ENCODE measurements at regions of chr1 and their contacts with region 1.

Region 1: GRCh38 chr1:107474877-107475612 is 334.2 kb downstream of the NTNG1 start:
- DNase-seq: no peak
- H3K4me3 Mint-ChIP-seq: no peak overlapping the region
- H3K27ac Mint-ChIP-seq: peak overlapping the region; percentile 53
- H3K4me1 Mint-ChIP-seq: peaks cover 13% of the 10 kb centered on the region
- H3K27me3 Mint-ChIP-seq: no peaks in the 10 kb centered on the region
- CTCF ChIP-seq: no peak

Region 2: DNA sequence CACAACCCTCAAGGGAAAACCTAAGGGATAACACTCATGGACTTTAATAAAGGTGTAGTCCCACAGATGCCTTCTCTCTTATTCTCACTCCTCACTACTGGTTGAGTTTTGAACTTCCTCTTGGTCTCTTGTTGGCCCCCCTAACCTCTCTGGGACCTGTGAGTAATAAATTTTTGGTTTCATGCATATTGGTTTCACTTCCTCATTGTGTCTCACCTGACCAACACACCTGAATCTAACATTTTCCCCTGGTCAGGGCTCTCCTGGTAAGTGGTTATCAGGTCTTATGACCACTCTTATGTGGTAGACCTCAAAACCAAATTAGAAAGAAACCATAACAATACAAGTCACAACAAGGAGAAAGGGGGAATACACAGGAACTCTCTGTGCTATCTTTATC is 479.1 kb before region 1 on chr1:
- CTCF ChIA-PET with region 1: no interaction called
- POLR2A ChIA-PET with region 1: no interaction called
- intact Hi-C with region 1: no loop called
- DNase-seq: no peak
- H3K4me3 Mint-ChIP-seq: no peak overlapping the region
- H3K27ac Mint-ChIP-seq: no peak overlapping the region
- H3K4me1 Mint-ChIP-seq: no peaks in the 10 kb centered on the region
- H3K27me3 Mint-ChIP-seq: no peaks in the 10 kb centered on the region
- CTCF ChIP-seq: no peak

Region 3: GRCh38 chr1:107486349-107486748 is 11.3 kb after region 1 on chr1:
- CTCF ChIA-PET with region 1: interaction called, 7 read pairs
- POLR2A ChIA-PET with region 1: interaction called, 59 read pairs
- intact Hi-C with region 1: no loop called
- DNase-seq: no peak
- H3K4me3 Mint-ChIP-seq: no peak overlapping the region
- H3K27ac Mint-ChIP-seq: peak overlapping the region; percentile 27
- H3K4me1 Mint-ChIP-seq: peaks cover 26% of the 10 kb centered on the region
- H3K27me3 Mint-ChIP-seq: no peaks in the 10 kb centered on the region
- CTCF ChIP-seq: no peak

Region 4: GRCh38 chr1:107547363-107548155 is 72.5 kb after region 1 on chr1:
- CTCF ChIA-PET with region 1: no interaction called
- POLR2A ChIA-PET with region 1: no interaction called
- intact Hi-C with region 1: no loop called
- DNase-seq: peak; percentile 55
- H3K4me3 Mint-ChIP-seq: no peak overlapping the region
- H3K27ac Mint-ChIP-seq: no peak overlapping the region
- H3K4me1 Mint-ChIP-seq: peaks cover 6% of the 10 kb centered on the region
- H3K27me3 Mint-ChIP-seq: no peaks in the 10 kb centered on the region
- CTCF ChIP-seq: no peak